Naive thymus-derived CD4-positive, alpha-beta T cell (primary cell): ENCODE measurements at regions of chr2 and their contacts with region 1.

Region 1: DNA sequence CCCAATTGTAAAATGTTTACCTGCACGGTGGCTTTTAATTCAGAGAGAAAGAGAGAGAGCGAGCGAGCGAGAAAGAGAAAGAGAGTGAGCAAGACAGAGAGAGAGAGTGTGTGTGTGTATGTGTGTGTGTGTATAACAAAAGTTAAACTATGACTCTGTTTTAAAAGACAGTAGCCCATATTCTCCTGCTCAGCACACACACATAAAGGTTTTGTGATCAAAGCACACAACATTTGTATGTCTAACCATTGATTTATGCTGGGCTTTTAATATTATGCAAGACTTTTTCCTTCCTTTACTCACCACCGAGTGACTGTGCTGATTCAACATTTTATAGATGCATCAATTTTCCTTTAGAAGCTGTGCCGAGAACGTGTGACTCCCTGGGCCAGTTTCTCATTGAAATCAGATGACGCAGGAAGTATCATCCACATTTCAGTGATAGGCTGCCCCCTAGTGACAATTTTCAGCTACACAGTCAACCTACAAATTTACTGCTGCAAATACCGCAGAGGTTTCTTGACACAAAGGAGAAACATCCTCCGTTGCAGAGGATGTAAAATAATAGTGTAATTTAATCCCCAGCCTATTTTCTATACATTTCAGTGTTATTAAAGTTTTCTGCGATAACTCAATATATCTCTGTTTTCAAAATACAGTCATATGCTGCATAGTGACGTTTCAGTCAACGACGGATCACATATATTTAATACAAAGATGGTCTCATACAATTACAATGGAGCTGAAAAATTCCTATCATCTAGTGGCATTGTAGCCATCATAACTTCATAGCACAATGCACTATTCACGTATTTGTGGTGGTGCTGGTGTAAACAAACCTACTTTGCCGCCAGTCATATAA is 165.9 kb upstream of the TANK start:
- DNase-seq: peak; percentile 11 to 86 (median 80)
- ATAC-seq: peak; percentile 95
- H3K4me3 ChIP-seq: no peak overlapping the region
- H3K4me3 Mint-ChIP-seq: peak overlapping the region in 9 of 10 donors; percentile 4 to 76 (median 55)
- H3K27ac ChIP-seq: no peak overlapping the region
- H3K27ac Mint-ChIP-seq: peak overlapping the region in 7 of 9 donors; percentile 0 to 84 (median 26)
- H3K4me1 ChIP-seq: no peaks in the 10 kb centered on the region
- H3K4me1 Mint-ChIP-seq: peaks cover 5 to 13% (median 11%) of the 10 kb centered on the region in 7 donors
- H3K27me3 ChIP-seq: no peaks in the 10 kb centered on the region
- H3K27me3 Mint-ChIP-seq: peaks cover 0 to 13% (median 0%) of the 10 kb centered on the region in 5 donors

Region 2: GRCh38 chr2:160109936-160110673 is 884.3 kb before region 1 on chr2:
- CTCF ChIA-PET with region 1: interaction called, 30 read pairs
- POLR2A ChIA-PET with region 1: no interaction called
- intact Hi-C with region 1: loop called (anchors 1 kb)
- DNase-seq: peak in 7 of 9 donors; percentile 34 to 74 (median 66)
- ATAC-seq: peak; percentile 85
- H3K4me3 ChIP-seq: no peak overlapping the region
- H3K4me3 Mint-ChIP-seq: no peak overlapping the region
- H3K27ac ChIP-seq: no peak overlapping the region
- H3K27ac Mint-ChIP-seq: no peak overlapping the region
- H3K4me1 ChIP-seq: no peaks in the 10 kb centered on the region
- H3K4me1 Mint-ChIP-seq: no peaks in the 10 kb centered on the region
- H3K27me3 ChIP-seq: no peaks in the 10 kb centered on the region
- H3K27me3 Mint-ChIP-seq: peaks cover 0 to 24% (median 8%) of the 10 kb centered on the region in 5 donors

Region 3: GRCh38 chr2:160210599-160211138 is 783.7 kb before region 1 on chr2:
- CTCF ChIA-PET with region 1: interaction called, 5 read pairs
- POLR2A ChIA-PET with region 1: no interaction called
- intact Hi-C with region 1: loop called in 1 of 2 experiments (anchors 1 kb)
- DNase-seq: peak; percentile 46 to 79 (median 71)
- ATAC-seq: peak; percentile 90
- H3K4me3 ChIP-seq: no peak overlapping the region
- H3K4me3 Mint-ChIP-seq: no peak overlapping the region
- H3K27ac ChIP-seq: no peak overlapping the region
- H3K27ac Mint-ChIP-seq: peak overlapping the region in 1 of 9 donors; percentile 19
- H3K4me1 ChIP-seq: no peaks in the 10 kb centered on the region
- H3K4me1 Mint-ChIP-seq: peaks cover 0 to 11% (median 8%) of the 10 kb centered on the region in 7 donors
- H3K27me3 ChIP-seq: no peaks in the 10 kb centered on the region
- H3K27me3 Mint-ChIP-seq: peaks cover 0 to 22% (median 5%) of the 10 kb centered on the region in 5 donors

Region 4: GRCh38 chr2:160252278-160252887 is 742.0 kb before region 1 on chr2:
- CTCF ChIA-PET with region 1: interaction called, 52 read pairs
- POLR2A ChIA-PET with region 1: no interaction called
- intact Hi-C with region 1: loop called (anchors 1 kb)
- DNase-seq: peak in 2 of 9 donors; percentile 14 to 18
- ATAC-seq: peak; percentile 57
- H3K4me3 ChIP-seq: no peak overlapping the region
- H3K4me3 Mint-ChIP-seq: no peak overlapping the region
- H3K27ac ChIP-seq: no peak overlapping the region
- H3K27ac Mint-ChIP-seq: peak overlapping the region in 1 of 9 donors; percentile 2
- H3K4me1 ChIP-seq: no peaks in the 10 kb centered on the region
- H3K4me1 Mint-ChIP-seq: peaks cover 0 to 5% (median 0%) of the 10 kb centered on the region in 7 donors
- H3K27me3 ChIP-seq: no peaks in the 10 kb centered on the region
- H3K27me3 Mint-ChIP-seq: peaks cover 4 to 18% (median 6%) of the 10 kb centered on the region in 5 donors

Region 5: DNA sequence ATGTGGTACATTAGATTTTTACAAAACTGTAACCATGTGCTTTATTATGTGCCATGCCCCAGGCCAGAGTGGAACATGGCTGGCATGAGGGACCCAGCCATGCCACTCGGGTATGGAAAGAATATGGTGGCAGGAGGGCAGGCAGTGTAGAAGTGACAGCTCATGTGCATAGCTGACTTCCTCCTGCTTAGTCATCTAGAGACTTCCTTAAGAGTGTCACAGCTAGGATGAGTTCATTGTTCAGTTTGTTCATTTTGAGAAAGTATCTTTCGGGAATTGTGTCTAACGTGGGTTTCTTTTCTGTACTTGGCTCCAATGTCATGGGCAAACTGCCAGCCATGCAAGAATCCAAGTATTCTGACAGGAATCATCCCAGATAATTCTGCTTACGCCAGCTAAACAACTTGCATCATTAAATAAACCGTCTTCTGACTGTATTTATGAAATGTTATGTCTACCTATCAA is 700.0 kb before region 1 on chr2:
- CTCF ChIA-PET with region 1: interaction called, 5 read pairs
- POLR2A ChIA-PET with region 1: no interaction called
- intact Hi-C with region 1: loop called in 1 of 2 experiments (anchors 1 kb)
- DNase-seq: peak in 1 of 9 donors; percentile 28
- ATAC-seq: peak; percentile 74
- H3K4me3 ChIP-seq: no peak overlapping the region
- H3K4me3 Mint-ChIP-seq: no peak overlapping the region
- H3K27ac ChIP-seq: no peak overlapping the region
- H3K27ac Mint-ChIP-seq: peak overlapping the region in 4 of 9 donors; percentile 15 to 49 (median 33)
- H3K4me1 ChIP-seq: peaks cover 0 to 32% of the 10 kb centered on the region in 2 donors
- H3K4me1 Mint-ChIP-seq: peaks cover 37 to 86% (median 66%) of the 10 kb centered on the region in 7 donors
- H3K27me3 ChIP-seq: no peaks in the 10 kb centered on the region
- H3K27me3 Mint-ChIP-seq: no peaks in the 10 kb centered on the region

Region 6: DNA sequence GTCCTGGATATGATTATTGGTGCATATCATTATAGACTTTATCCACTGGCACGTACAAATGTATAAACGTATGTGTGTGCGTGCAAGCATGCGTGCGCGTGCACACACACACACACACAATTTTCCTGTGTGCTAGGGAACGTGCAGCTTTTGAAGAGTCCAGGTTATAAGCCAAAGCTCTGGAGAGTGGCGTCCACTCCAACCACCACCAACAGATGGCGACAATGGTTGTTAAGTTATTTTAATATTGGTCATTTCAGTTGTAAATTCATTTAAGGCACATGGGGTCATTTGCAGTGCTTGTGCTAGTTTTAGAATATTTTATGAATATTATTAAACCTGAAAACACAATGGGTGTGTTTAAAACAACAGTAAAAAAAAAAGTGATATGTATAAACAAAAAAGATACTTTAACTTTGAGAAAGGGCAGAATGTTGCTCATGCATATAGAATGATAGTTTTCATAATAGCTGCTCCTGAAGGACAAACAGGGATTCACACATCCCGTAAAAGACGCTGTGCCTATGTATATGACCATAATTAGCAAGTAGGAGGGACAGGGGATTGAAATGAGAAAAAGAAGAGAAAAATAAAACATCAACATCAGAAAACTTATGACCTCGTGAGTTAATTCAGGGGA is 670.1 kb before region 1 on chr2:
- CTCF ChIA-PET with region 1: interaction called, 32 read pairs
- POLR2A ChIA-PET with region 1: no interaction called
- intact Hi-C with region 1: loop called (anchors 1 to 2 kb)
- DNase-seq: peak in 5 of 9 donors; percentile 10 to 38 (median 21)
- ATAC-seq: peak; percentile 64
- H3K4me3 ChIP-seq: no peak overlapping the region
- H3K4me3 Mint-ChIP-seq: peak overlapping the region in 1 of 10 donors; percentile 40
- H3K27ac ChIP-seq: no peak overlapping the region
- H3K27ac Mint-ChIP-seq: peak overlapping the region in 3 of 9 donors; percentile 10 to 65 (median 32)
- H3K4me1 ChIP-seq: peaks cover 10 to 58% of the 10 kb centered on the region in 2 donors
- H3K4me1 Mint-ChIP-seq: peaks cover 61 to 98% (median 96%) of the 10 kb centered on the region in 7 donors
- H3K27me3 ChIP-seq: no peaks in the 10 kb centered on the region
- H3K27me3 Mint-ChIP-seq: no peaks in the 10 kb centered on the region

Region 7: DNA sequence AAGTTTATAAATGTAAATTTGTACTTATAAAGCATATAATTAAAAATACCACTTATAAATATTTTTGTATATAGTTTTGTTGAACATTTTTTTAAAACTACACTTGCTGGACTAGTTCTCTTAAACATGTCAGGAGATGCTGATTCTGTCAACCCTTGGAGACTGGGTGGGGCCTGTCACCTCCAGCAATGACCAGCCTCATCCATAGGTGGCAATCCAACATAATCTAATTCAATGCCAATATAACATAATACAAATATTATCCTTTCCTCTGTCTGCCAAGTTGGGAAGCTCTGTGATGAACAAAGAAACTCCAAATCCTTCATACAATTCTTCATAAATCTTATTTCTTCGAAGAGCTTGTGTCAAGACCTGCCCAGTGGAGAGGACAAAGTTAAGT is 641.2 kb before region 1 on chr2:
- CTCF ChIA-PET with region 1: interaction called, 6 read pairs
- POLR2A ChIA-PET with region 1: no interaction called
- intact Hi-C with region 1: loop called (anchors 1 kb)
- DNase-seq: peak in 6 of 9 donors; percentile 14 to 45 (median 24)
- ATAC-seq: peak; percentile 72
- H3K4me3 ChIP-seq: no peak overlapping the region
- H3K4me3 Mint-ChIP-seq: peak overlapping the region in 1 of 10 donors; percentile 36
- H3K27ac ChIP-seq: no peak overlapping the region
- H3K27ac Mint-ChIP-seq: peak overlapping the region in 4 of 9 donors; percentile 51 to 81 (median 66)
- H3K4me1 ChIP-seq: peaks cover 0 to 5% of the 10 kb centered on the region in 2 donors
- H3K4me1 Mint-ChIP-seq: peaks cover 47 to 91% (median 83%) of the 10 kb centered on the region in 7 donors
- H3K27me3 ChIP-seq: no peaks in the 10 kb centered on the region
- H3K27me3 Mint-ChIP-seq: no peaks in the 10 kb centered on the region